ENCODE measurements at regions of chr1 and their contacts with region 1.

Region 1: GRCh38 chr1:117051224-117052064 is 8.7 kb upstream of the TTF2 start:
- DNase-seq: no peak
- ATAC-seq: peak in 3 of 4 donors; percentile 47 to 56 (median 52)
- H3K4me3 ChIP-seq: no peak overlapping the region
- H3K27ac ChIP-seq: peak overlapping the region in 3 of 4 donors; percentile 19 to 40 (median 39)
- H3K4me1 ChIP-seq: peaks cover 0 to 5% (median 0%) of the 10 kb centered on the region in 3 donors
- H3K27me3 ChIP-seq: no peaks in the 10 kb centered on the region
- CTCF ChIP-seq: no peak

Region 2: GRCh38 chr1:116737020-116737854 is 314.2 kb before region 1 on chr1:
- intact Hi-C with region 1: loop called in 2 of 3 experiments (anchors 5 kb)
- DNase-seq: peak; percentile 25 to 71 (median 52)
- ATAC-seq: peak; percentile 82 to 94 (median 92)
- H3K4me3 ChIP-seq: no peak overlapping the region
- H3K27ac ChIP-seq: no peak overlapping the region
- H3K4me1 ChIP-seq: no peaks in the 10 kb centered on the region
- H3K27me3 ChIP-seq: no peaks in the 10 kb centered on the region
- CTCF ChIP-seq: peak in 3 of 4 donors; percentile 57 to 63 (median 61)

Region 3: DNA sequence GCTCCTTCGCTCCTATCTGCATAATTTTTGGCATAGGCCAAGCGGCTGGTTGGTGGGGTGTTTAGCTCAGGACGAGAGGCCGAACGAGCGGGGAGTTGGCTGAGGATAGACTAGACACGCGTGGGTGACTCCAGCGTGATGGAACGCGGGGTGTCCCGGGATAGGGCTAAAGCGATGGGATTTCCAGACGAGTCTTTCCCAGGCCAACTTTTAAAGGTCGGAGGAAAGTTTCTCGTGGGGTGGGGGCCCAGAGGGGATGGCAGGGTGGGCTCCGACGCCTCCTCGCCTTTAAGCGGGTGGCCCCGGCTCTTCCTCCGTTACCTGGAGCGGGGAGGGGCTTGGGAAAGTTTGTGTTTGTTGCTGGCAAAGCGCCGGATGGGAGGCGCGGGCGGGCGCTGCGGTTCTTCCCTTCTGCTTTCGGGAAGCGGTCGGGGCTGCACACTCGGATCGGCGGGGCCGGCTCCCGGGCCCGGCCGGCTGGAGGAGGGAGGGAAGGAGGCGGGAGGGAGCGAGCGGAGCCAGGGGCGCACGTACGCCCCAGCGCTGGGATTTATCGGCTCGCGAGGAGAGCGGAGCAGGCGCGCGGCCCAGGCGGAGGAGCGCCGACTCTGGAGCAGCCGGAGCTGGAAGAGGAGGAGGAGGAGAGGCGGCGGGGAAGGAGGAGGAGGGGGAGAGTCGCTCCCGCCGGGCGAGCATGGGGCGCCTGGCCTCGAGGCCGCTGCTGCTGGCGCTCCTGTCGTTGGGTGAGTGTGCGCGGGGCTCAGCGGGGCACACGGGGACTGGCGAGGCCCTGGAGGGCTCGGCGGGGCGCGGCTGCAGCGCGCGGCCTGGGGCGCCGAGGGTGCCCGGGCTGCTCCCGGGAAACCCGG is 141.7 kb before region 1 on chr1 and contains the start of gene PTGFRN:
- intact Hi-C with region 1: no loop called
- DNase-seq: peak; percentile 74 to 91 (median 85)
- ATAC-seq: peak; percentile 70 to 81 (median 78)
- H3K4me3 ChIP-seq: peak within 1 kb of the TSS; percentile 53 to 87 (median 82)
- H3K27ac ChIP-seq: peak within 1 kb of the TSS; percentile 68 to 88 (median 81)
- H3K4me1 ChIP-seq: peaks cover 0 to 18% (median 4%) of the 10 kb centered on the region in 3 donors
- H3K27me3 ChIP-seq: no peaks in the 10 kb centered on the region
- CTCF ChIP-seq: no peak
- total RNA-seq, gene PTGFRN: 20.4 to 62.0 (median 25.6) TPM

Region 4: DNA sequence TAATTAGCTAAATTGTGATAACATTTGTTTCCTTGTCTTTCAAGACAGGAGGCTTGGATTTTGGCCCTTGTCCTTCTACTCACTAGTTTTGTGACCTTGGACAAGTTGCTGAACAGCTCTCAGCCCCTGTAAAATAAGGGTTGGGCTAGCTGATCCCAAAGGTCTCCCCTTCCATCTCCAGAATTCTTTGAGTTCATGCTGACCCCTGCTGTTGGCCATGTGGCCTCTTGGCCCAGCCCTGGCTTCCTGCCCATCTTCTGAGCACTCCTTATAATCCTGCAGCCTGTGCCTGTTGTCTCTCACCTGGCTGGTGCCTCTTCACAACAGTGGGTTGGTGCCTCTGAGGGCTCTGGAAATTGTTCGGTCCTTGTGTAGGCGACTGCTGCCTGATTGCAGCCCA is 131.6 kb before region 1 on chr1:
- intact Hi-C with region 1: no loop called
- DNase-seq: peak; percentile 57 to 76 (median 64)
- ATAC-seq: peak; percentile 35 to 60 (median 50)
- H3K4me3 ChIP-seq: no peak overlapping the region
- H3K27ac ChIP-seq: no peak overlapping the region
- H3K4me1 ChIP-seq: peaks cover 20 to 50% (median 32%) of the 10 kb centered on the region in 3 donors
- H3K27me3 ChIP-seq: no peaks in the 10 kb centered on the region
- CTCF ChIP-seq: no peak

Region 5: GRCh38 chr1:116962987-116963639 is 88.3 kb before region 1 on chr1:
- intact Hi-C with region 1: no loop called
- DNase-seq: no peak
- ATAC-seq: no peak
- H3K4me3 ChIP-seq: no peak overlapping the region
- H3K27ac ChIP-seq: no peak overlapping the region
- H3K4me1 ChIP-seq: no peaks in the 10 kb centered on the region
- H3K27me3 ChIP-seq: no peaks in the 10 kb centered on the region
- CTCF ChIP-seq: no peak

Region 6: GRCh38 chr1:117008656-117009055 is 42.8 kb before region 1 on chr1:
- intact Hi-C with region 1: no loop called
- DNase-seq: no peak
- ATAC-seq: no peak
- H3K4me3 ChIP-seq: no peak overlapping the region
- H3K27ac ChIP-seq: no peak overlapping the region
- H3K4me1 ChIP-seq: peaks cover 0 to 4% (median 0%) of the 10 kb centered on the region in 3 donors
- H3K27me3 ChIP-seq: no peaks in the 10 kb centered on the region
- CTCF ChIP-seq: no peak

Measured in pancreas (tissue), 10 donors.